SK-N-SH (cell line): ENCODE measurements at regions of chr1 and their contacts with region 1.

Region 1: GRCh38 chr1:77590651-77591050 is 91.8 kb downstream of the ZZZ3 start:
- DNase-seq: no peak
- H3K4me3 ChIP-seq: no peak overlapping the region
- H3K27ac ChIP-seq: no peak overlapping the region
- H3K4me1 ChIP-seq: peaks cover 0 to 13% of the 10 kb centered on the region in 2 experiments; a peak in 2 of 4 replicates
- H3K27me3 ChIP-seq: no peaks in the 10 kb centered on the region
- CTCF ChIP-seq: no peak
- EP300 ChIP-seq: no peak
- RAD21 ChIP-seq: no peak

Region 2: DNA sequence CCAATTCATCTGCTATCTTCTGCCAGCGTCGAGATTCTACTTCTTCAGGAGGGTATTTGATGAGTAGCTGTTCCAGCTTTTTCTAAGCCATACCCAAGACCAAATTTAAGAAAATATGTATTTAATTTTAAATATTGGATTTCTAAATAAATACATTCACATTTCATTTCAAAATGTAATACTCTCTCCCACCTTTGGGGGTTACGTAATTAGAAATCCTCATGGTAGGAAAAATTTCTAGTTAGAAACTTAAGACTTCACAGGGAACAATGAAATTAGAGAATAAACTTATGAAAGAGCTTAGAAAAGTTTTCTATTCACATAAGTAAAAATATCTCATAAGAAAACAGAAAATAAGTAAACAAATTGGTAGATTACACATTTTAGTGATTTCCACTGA is 11.1 kb before region 1 on chr1:
- CTCF ChIA-PET with region 1: interaction called, 10 read pairs
- POLR2A ChIA-PET with region 1: no interaction called
- DNase-seq: peak; percentile 3
- H3K4me3 ChIP-seq: no peak overlapping the region
- H3K27ac ChIP-seq: no peak overlapping the region
- H3K4me1 ChIP-seq: no peaks in the 10 kb centered on the region
- H3K27me3 ChIP-seq: no peaks in the 10 kb centered on the region
- CTCF ChIP-seq: no peak; the same call in 1 of the 2 replicates
- EP300 ChIP-seq: no peak
- RAD21 ChIP-seq: no peak